ENCODE measurements at regions of chr2 and their contacts with region 1.

Region 1: DNA sequence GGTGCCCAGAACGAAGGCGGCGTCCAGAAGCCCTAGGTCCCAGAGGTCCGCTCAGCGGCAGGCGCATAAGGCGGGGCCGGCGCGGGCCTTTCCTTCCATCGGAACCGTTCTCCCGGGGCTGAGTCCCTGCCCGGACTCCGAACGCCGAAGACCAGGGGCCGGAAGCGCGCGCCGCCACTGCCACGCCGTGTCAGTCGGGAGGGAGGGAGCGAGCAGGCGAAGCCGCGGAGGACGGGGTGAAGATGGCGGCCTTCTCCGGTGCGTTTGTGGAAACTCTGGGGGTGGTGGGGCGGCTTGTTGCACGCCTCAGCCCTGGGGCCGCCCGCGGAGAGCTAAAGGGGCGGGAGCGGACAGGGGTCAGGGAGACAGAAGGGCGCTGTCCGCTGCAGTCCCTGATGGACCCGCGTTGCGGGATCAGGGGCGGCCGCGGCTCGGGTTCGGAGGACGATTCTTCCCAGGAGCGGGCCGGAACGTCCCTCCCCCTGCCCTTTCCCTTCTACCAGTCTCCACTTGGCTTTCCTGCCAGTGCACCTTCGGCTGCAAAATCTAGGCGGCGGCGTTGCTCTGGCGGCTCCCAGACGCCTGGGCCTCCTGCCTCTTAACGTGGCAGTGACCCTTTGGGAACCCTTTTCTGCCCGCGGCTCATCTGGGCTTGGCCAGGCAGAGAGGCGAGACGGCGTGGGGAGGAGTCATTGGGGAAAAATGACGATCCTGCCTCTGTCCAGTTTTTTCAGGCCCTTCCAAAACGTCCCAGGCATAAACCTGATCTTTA is at the start of gene DDX1:
- DNase-seq: peak; percentile 92
- total RNA-seq, gene DDX1: 112 TPM

Region 2: DNA sequence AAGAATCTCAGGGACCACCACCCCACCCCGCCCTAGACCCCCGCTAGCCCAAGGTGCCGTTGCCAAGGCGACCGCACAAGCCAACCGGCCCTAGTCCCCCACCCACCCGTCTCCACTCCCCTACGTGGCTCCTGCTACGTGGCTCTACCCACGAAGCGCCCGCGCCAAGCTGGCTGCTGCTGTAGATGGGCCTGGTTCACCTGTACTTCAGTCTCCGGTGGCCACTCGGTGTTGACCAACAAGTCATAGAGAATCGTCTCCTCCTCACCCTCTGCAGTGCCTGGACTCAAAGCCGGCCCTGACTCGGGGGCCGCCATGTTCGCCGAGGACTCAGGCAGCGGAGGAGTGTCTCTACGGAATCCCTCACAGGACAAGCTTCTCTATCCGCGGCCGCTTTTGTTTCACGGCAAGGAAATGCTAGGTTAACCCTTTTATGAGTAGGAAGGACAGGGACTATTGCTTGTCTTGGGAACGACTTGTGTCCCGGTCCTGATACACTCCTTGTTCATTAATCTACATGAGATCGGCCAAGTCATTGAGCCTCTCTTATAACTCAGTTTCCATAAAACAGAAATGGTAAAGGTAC is 30.8 kb before region 1 on chr2 and contains the start of gene NBAS:
- intact Hi-C with region 1: loop called (anchors 1 kb)
- DNase-seq: peak; percentile 91
- total RNA-seq, gene NBAS: 38.9 TPM